Activated naive CD4-positive, alpha-beta T cell treated with anti-CD3 and anti-CD28 coated beads for 36 hours (primary cell): ENCODE measurements at regions of chr6 and their contacts with region 1.

Region 1: DNA sequence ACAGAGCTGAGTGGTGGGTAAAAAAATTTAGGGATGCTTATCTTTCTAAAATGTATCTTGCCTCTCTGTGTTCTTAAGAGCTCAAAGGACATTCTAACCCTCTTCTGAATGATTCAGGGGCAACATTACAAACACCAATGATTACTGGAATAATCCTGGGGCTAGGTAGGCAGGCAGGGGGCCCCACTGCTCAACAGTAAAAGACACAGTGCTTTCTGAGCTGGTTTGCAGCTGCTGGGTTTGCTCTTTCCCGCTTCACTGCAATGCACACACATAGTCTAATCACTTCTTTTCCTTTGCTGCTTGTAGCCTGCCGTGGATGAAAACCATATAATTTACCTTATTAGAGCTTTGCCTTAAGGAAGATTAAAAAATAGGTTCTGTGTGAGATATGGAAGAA is 23.9 kb downstream of the CLDN20 start:
- DNase-seq: no peak
- H3K4me3 Mint-ChIP-seq: no peak overlapping the region
- H3K27ac Mint-ChIP-seq: no peak overlapping the region
- H3K4me1 Mint-ChIP-seq: peaks cover 4% of the 10 kb centered on the region
- H3K27me3 Mint-ChIP-seq: no peaks in the 10 kb centered on the region

Region 2: DNA sequence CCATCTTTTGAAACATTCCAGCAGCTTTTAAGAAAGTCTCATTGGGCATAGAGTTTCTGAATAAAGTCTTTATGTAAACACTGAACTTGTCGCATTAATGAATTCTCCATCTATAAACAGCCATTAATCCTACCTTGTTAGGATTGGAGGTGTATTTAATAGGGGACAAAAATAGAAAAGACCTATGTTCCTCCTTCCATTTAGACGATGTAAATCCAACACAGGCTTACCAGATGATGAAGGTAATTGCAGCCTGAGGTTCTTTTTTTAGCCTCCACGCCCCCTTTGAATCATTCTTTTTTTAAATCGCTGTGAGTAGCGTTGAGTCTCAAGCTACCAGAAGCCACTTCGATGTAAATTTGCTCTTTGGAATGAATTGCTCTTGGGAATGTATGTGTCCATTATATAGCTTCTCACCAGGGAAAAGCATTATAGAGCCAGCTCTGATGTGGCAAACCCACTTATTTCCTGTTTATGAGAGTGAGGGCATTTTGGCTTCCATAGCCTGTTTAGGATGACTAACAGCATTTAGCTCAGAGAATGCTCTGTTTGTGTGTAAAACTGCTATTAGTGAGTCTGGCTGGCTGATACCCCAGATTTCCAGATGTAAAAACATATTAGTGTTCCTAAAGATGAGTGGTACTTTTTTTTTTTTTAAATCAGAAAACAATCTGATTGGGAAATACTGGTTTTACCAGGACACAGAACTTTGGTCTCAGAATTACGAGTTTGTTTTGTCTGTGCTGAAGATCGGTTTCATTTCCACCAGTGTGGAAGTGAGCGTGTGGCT is 98.9 kb before region 1 on chr6:
- CTCF ChIA-PET with region 1: no interaction called
- intact Hi-C with region 1: no loop called
- DNase-seq: no peak
- H3K4me3 Mint-ChIP-seq: no peak overlapping the region
- H3K27ac Mint-ChIP-seq: no peak overlapping the region
- H3K4me1 Mint-ChIP-seq: peaks cover 50% of the 10 kb centered on the region
- H3K27me3 Mint-ChIP-seq: no peaks in the 10 kb centered on the region

Region 3: GRCh38 chr6:155301867-155302266 is 14.1 kb after region 1 on chr6:
- CTCF ChIA-PET with region 1: interaction called, 13 read pairs
- intact Hi-C with region 1: no loop called
- DNase-seq: no peak
- H3K4me3 Mint-ChIP-seq: no peak overlapping the region
- H3K27ac Mint-ChIP-seq: no peak overlapping the region
- H3K4me1 Mint-ChIP-seq: peaks cover 6% of the 10 kb centered on the region
- H3K27me3 Mint-ChIP-seq: no peaks in the 10 kb centered on the region